HCT116 (cell line): ENCODE measurements at regions of chr7 and their contacts with region 1.

Region 1: GRCh38 chr7:47088329-47089067 is 493.4 kb downstream of the TNS3 start:
- DNase-seq: peak; percentile 34
- ATAC-seq: peak; percentile 99
- H3K4me3 ChIP-seq: no peak overlapping the region
- H3K27ac ChIP-seq: no peak overlapping the region
- H3K4me1 ChIP-seq: no peaks in the 10 kb centered on the region
- H3K27me3 ChIP-seq: no peaks in the 10 kb centered on the region
- CTCF ChIP-seq: peak; percentile 72 to 89 (median 75)
- POLR2A ChIP-seq: no peak
- RAD21 ChIP-seq: peak; percentile 95

Region 2: DNA sequence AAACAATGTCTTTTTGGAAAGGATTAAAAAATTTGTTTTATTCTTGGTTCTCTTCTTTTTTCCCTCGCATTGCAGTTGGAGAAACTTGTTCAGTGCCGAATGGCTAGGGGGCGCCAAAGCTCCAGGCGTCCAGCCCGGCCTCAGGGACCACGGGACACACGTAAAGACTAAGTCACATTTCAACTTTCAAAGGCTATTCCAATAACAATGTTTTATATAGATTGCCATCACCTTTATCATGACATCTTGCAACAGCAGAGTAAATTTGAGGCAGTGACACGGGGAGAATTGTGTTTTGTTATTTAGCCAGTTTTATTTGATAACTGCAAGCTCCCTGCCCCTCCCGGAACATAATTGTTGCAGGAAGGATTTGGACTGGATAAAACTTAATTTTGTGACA is 1165.2 kb before region 1 on chr7:
- CTCF ChIA-PET with region 1: interaction called, 12 read pairs
- POLR2A ChIA-PET with region 1: no interaction called
- RAD21 ChIA-PET with region 1: no interaction called
- intact Hi-C with region 1: loop called (anchors 2 kb)
- DNase-seq: no peak
- ATAC-seq: peak; percentile 45; the same call in 1 of the 2 replicates
- H3K4me3 ChIP-seq: no peak overlapping the region
- H3K27ac ChIP-seq: no peak overlapping the region
- H3K4me1 ChIP-seq: peaks cover 3 to 27% of the 10 kb centered on the region in 2 experiments; a peak in 2 of 4 replicates
- H3K27me3 ChIP-seq: peaks cover 8% of the 10 kb centered on the region; the same call in 1 of the 2 replicates
- CTCF ChIP-seq: peak; percentile 82 to 97 (median 93)
- POLR2A ChIP-seq: no peak
- RAD21 ChIP-seq: peak; percentile 93

Region 3: GRCh38 chr7:46352004-46352954 is 736.2 kb before region 1 on chr7:
- CTCF ChIA-PET with region 1: no interaction called
- POLR2A ChIA-PET with region 1: no interaction called
- RAD21 ChIA-PET with region 1: no interaction called
- intact Hi-C with region 1: loop called (anchors 2 kb)
- DNase-seq: peak; percentile 56
- ATAC-seq: peak; percentile 86
- H3K4me3 ChIP-seq: no peak overlapping the region
- H3K27ac ChIP-seq: no peak overlapping the region
- H3K4me1 ChIP-seq: no peaks in the 10 kb centered on the region
- H3K27me3 ChIP-seq: no peaks in the 10 kb centered on the region
- CTCF ChIP-seq: peak; percentile 56 to 84 (median 76); a peak in 5 of 6 replicates
- POLR2A ChIP-seq: no peak
- RAD21 ChIP-seq: peak; percentile 90

Region 4: GRCh38 chr7:46685051-46685450 is 403.4 kb before region 1 on chr7:
- CTCF ChIA-PET with region 1: no interaction called
- POLR2A ChIA-PET with region 1: no interaction called
- RAD21 ChIA-PET with region 1: no interaction called
- intact Hi-C with region 1: loop called (anchors 1 kb)
- DNase-seq: no peak
- ATAC-seq: peak; percentile 63
- H3K4me3 ChIP-seq: no peak overlapping the region
- H3K27ac ChIP-seq: no peak overlapping the region
- H3K4me1 ChIP-seq: no peaks in the 10 kb centered on the region
- H3K27me3 ChIP-seq: no peaks in the 10 kb centered on the region
- CTCF ChIP-seq: peak in 2 of 3 experiments; percentile 40 to 43; a peak in 4 of 6 replicates
- POLR2A ChIP-seq: no peak
- RAD21 ChIP-seq: peak; percentile 63

Region 5: DNA sequence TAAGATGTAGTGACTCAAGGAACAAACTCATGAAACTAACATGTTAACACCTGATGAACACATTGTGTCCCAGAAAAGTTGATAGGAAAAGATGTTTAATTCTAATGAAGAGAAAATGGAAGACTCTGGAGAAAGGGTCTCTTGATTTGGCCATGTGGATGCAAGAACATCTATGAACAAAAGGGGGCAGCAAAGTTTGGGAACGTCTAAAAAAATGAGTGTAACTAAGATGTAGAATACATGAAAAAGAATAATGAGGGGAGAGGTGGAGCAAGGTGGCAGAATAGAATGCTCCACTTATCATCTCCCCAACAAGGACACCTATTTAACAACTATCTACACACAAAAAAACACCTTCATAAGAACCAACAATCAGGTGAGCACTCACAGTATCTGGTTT is 311.7 kb before region 1 on chr7:
- CTCF ChIA-PET with region 1: no interaction called
- POLR2A ChIA-PET with region 1: no interaction called
- RAD21 ChIA-PET with region 1: no interaction called
- intact Hi-C with region 1: loop called (anchors 2 kb)
- DNase-seq: no peak
- ATAC-seq: no peak
- H3K4me3 ChIP-seq: no peak overlapping the region
- H3K27ac ChIP-seq: no peak overlapping the region
- H3K4me1 ChIP-seq: no peaks in the 10 kb centered on the region
- H3K27me3 ChIP-seq: no peaks in the 10 kb centered on the region
- CTCF ChIP-seq: peak; percentile 34 to 63 (median 40); a peak in 5 of 6 replicates
- POLR2A ChIP-seq: no peak
- RAD21 ChIP-seq: peak; percentile 59

Region 6: GRCh38 chr7:47361746-47362215 is 273.3 kb after region 1 on chr7:
- CTCF ChIA-PET with region 1: no interaction called
- POLR2A ChIA-PET with region 1: no interaction called
- RAD21 ChIA-PET with region 1: no interaction called
- intact Hi-C with region 1: no loop called
- DNase-seq: peak; percentile 59
- ATAC-seq: peak; percentile 69
- H3K4me3 ChIP-seq: no peak overlapping the region
- H3K27ac ChIP-seq: no peak overlapping the region
- H3K4me1 ChIP-seq: peaks cover 13% of the 10 kb centered on the region in 2 experiments
- H3K27me3 ChIP-seq: no peaks in the 10 kb centered on the region
- CTCF ChIP-seq: no peak
- POLR2A ChIP-seq: no peak
- RAD21 ChIP-seq: no peak